ENCODE measurements at regions of chr1 and their contacts with region 1.

Region 1: DNA sequence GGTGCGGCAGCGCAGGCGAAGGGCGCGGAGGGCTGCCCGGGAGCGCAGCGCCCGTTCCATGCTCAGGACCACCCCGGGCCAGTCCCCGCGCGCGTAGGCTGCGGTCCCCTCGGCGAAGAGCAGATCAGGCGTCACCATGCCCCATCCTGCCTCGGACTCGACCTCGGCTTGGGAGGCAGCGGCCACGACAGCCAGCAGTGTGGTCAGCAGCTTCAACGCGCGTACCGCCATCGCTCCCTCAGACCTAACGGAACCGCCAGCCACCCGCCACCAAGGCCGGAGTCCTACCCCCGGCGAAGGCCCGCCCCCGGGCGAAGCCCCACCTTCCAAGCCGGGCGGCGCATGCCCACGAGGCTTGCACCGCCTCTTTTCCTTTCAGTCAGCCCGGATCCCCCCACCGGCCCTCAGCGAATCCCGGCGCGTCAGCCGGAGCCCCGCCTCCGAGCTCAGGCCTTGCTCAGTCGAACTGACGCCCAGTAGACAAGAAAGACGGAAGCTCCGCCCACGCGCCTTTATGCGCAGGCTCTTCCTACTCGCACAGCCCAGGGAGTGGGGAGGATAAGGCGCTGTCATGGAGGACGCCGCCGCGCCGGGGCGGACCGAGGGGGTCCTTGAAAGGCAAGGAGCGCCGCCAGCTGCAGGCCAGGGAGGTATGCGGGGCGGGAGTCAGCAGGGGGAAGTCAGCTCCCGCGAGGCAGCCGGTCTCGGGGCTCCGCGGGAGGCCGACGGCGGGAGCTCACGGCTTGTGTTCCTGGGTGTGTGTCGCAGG is at the starts of genes C1orf50 and P3H1:
- DNase-seq: peak; percentile 100
- H3K4me3 ChIP-seq: peak within 1 kb of the TSS; percentile 65 to 91 (median 90)
- H3K27ac ChIP-seq: peak within 1 kb of the TSS; percentile 62
- H3K4me1 ChIP-seq: peaks cover 20% of the 10 kb centered on the region
- H3K27me3 ChIP-seq: no peaks in the 10 kb centered on the region
- CTCF ChIP-seq: no peak
- POLR2A ChIP-seq: peak; percentile 92
- total RNA-seq, gene C1orf50: 4.0 and 7.4 TPM in 2 replicates
- total RNA-seq, gene P3H1: 136 and 146 TPM in 2 replicates

Region 2: GRCh38 chr1:42403880-42404400 is 363.0 kb before region 1 on chr1:
- CTCF ChIA-PET with region 1: no interaction called
- POLR2A ChIA-PET with region 1: no interaction called
- dilution Hi-C with region 1: no loop called
- intact Hi-C with region 1: no loop called
- DNase-seq: no peak
- H3K4me3 ChIP-seq: no peak overlapping the region
- H3K27ac ChIP-seq: no peak overlapping the region
- H3K4me1 ChIP-seq: no peaks in the 10 kb centered on the region
- H3K27me3 ChIP-seq: peaks cover 4 to 12% of the 10 kb centered on the region in 2 experiments
- CTCF ChIP-seq: peak in 1 of 2 donors; percentile 16
- POLR2A ChIP-seq: no peak

Region 3: GRCh38 chr1:42456010-42456758 is 310.7 kb before region 1 on chr1 and contains the starts of genes PPCS and ZMYND12:
- CTCF ChIA-PET with region 1: no interaction called
- POLR2A ChIA-PET with region 1: no interaction called
- dilution Hi-C with region 1: no loop called
- intact Hi-C with region 1: loop called (anchors 5 kb)
- DNase-seq: peak; percentile 88
- H3K4me3 ChIP-seq: peak within 1 kb of the TSS; percentile 29 to 62 (median 59)
- H3K27ac ChIP-seq: peak within 1 kb of the TSS; percentile 46
- H3K4me1 ChIP-seq: peaks cover 5% of the 10 kb centered on the region
- H3K27me3 ChIP-seq: no peaks in the 10 kb centered on the region
- CTCF ChIP-seq: no peak
- POLR2A ChIP-seq: peak; percentile 89
- total RNA-seq, gene PPCS: 29.9 and 32.6 TPM in 2 replicates
- total RNA-seq, gene ZMYND12: 0.33 TPM in 1 of 2 replicates, not detected in the other

Region 4: DNA sequence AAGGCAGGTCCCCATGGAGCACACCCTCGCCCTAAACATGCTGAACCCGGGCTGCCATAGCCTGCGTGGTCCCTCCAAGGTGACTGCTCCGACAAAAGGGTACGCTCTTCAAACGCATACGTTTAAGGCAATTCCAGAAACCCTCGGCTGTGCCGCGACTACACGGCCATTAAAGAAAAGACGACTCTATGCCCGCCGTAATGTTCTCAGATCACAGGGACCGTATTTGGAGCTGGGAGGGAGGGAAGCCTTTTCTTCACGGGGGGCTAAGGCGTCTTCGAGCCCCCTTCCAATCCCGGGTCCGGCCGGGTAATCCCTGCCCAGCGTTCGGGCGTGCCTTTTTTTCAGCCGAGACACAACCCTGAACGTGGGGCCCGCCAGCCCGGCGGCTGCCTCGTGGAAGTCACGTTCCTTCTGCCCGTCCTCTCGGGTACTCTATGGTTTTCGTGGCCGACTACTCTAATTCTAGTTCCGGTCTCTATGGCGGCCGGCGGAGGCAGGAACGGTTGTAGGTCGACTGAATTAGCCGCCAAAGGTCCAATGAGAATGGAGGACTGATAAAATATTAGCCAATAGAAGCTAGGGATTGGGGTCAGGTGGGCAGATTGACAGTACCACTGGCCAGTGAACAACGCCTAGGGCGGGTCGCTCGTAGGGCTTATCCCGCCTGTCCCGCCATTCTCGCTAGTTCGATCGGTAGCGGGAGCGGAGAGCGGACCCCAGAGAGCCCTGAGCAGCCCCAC is 85.0 kb before region 1 on chr1 and contains the start of gene YBX1:
- CTCF ChIA-PET with region 1: interaction called, 7 read pairs
- POLR2A ChIA-PET with region 1: interaction called, 10 read pairs
- dilution Hi-C with region 1: no loop called
- intact Hi-C with region 1: loop called (anchors 2 kb)
- DNase-seq: peak; percentile 99
- H3K4me3 ChIP-seq: peak within 1 kb of the TSS; percentile 76 to 99 (median 95)
- H3K27ac ChIP-seq: peak within 1 kb of the TSS; percentile 72
- H3K4me1 ChIP-seq: peaks cover 41% of the 10 kb centered on the region
- H3K27me3 ChIP-seq: no peaks in the 10 kb centered on the region
- CTCF ChIP-seq: no peak
- POLR2A ChIP-seq: peak; percentile 86
- total RNA-seq, gene YBX1: 783 and 829 TPM in 2 replicates

Region 5: DNA sequence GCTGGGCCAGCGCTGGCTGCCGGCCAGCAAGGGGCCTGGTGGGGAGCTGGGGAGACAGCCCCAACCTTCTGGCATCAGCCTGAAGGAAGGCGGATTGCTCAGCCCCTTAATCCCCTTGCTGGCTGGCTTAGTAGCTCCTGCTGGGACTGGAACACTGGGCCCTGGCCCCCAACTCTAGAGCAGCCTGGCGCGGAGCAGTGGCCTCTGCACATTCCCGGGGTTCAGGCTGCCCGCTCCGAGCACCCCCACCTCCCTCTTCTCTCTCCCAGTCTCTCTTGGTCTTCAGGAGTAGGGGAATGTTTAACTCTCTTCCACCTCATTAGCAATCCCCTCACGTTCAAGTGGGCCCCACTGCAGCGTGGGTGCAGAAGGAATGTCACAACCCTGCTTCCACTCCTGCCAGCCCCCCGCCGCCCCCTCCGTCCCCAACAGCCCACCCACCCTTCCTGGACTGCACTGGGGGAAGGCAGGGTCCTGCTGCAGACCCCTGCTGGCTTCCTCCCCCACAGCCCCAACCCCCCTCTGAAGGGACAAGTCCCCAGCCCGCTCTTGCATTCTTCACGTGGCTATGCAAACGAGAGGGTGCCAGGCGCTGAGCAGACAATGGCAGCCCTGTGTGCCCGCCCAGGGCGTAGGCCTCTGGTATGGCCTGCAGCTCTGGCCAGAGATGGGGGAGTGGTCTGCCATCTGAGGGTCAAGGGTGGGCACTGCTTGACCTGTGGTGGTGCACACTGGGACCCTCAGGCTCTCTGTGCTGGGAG is 25.9 kb before region 1 on chr1:
- CTCF ChIA-PET with region 1: no interaction called
- POLR2A ChIA-PET with region 1: no interaction called
- dilution Hi-C with region 1: no loop called
- intact Hi-C with region 1: no loop called
- DNase-seq: no peak
- H3K4me3 ChIP-seq: no peak overlapping the region
- H3K27ac ChIP-seq: no peak overlapping the region
- H3K4me1 ChIP-seq: no peaks in the 10 kb centered on the region
- H3K27me3 ChIP-seq: no peaks in the 10 kb centered on the region
- CTCF ChIP-seq: no peak
- POLR2A ChIP-seq: no peak

Region 6: GRCh38 chr1:42784946-42785693 is 18.2 kb after region 1 on chr1 and contains the start of gene TMEM269:
- CTCF ChIA-PET with region 1: interaction called, 17 read pairs
- POLR2A ChIA-PET with region 1: no interaction called
- dilution Hi-C with region 1: no loop called
- intact Hi-C with region 1: no loop called
- DNase-seq: peak; percentile 38
- H3K4me3 ChIP-seq: peak within 1 kb of the TSS; percentile 14 to 37 (median 35)
- H3K27ac ChIP-seq: no peak within 1 kb of the TSS
- H3K4me1 ChIP-seq: peaks cover 8% of the 10 kb centered on the region
- H3K27me3 ChIP-seq: no peaks in the 10 kb centered on the region
- CTCF ChIP-seq: no peak
- POLR2A ChIP-seq: peak; percentile 21
- total RNA-seq, gene TMEM269: not detected in 2 replicates

Region 7: DNA sequence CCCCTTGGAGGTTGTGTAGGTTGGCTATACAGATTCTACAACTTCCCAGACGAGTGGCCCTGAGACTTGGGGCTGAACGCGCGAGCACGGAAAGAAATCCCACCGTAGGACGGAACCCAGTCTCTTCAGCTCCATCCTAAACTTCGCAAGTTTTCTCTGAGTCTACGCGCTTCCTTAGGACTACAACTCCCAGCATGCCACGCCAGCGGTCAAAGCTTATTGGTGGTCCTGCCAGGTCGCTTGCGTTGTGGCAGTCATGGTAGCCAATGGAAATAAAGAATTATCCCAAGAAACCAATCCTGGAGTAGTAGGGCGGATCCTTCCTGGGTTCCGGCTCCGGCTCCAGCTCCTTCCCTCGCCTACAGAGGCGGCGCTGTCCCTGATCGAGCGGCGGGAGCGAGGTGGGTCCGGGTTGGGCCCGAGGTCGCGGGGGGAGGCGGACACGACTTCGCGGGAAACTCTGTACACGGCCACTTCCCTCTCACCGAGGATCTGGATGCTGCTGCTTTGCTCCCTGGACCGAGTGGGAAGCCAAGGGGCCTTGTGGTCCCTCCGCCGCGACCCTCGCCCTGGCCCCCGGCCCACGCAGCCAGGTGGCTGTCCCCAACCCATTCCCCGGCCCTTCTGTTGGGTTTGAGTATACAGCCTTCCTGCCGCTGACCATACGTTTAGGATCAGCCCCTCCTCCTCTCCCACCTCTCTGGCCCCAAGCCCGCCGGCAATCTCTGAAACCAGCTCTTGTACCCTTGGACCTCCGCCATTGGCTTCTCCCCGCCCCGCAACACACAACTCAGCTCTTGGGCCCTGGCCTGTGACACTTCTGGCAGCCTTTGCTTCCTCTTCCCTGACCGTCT is 79.6 kb after region 1 on chr1 and contains the start of gene ZNF691:
- CTCF ChIA-PET with region 1: interaction called, 12 read pairs
- POLR2A ChIA-PET with region 1: interaction called, 5 read pairs
- dilution Hi-C with region 1: no loop called
- intact Hi-C with region 1: no loop called
- DNase-seq: peak; percentile 99
- H3K4me3 ChIP-seq: peak within 1 kb of the TSS; percentile 61 to 84 (median 75)
- H3K27ac ChIP-seq: no peak within 1 kb of the TSS
- H3K4me1 ChIP-seq: peaks cover 12% of the 10 kb centered on the region
- H3K27me3 ChIP-seq: no peaks in the 10 kb centered on the region
- CTCF ChIP-seq: peak in 1 of 2 donors; percentile 44
- POLR2A ChIP-seq: peak; percentile 78
- total RNA-seq, gene ZNF691: 6.6 and 7.4 TPM in 2 replicates

Region 8: GRCh38 chr1:43048601-43049011 is 281.7 kb after region 1 on chr1:
- CTCF ChIA-PET with region 1: no interaction called
- POLR2A ChIA-PET with region 1: no interaction called
- dilution Hi-C with region 1: no loop called
- intact Hi-C with region 1: no loop called
- DNase-seq: no peak
- H3K4me3 ChIP-seq: no peak overlapping the region
- H3K27ac ChIP-seq: no peak overlapping the region
- H3K4me1 ChIP-seq: no peaks in the 10 kb centered on the region
- H3K27me3 ChIP-seq: peaks cover 0 to 18% of the 10 kb centered on the region in 2 experiments
- CTCF ChIP-seq: no peak
- POLR2A ChIP-seq: no peak